ENCODE measurements at regions of chr6 and their contacts with region 1.

Region 1: DNA sequence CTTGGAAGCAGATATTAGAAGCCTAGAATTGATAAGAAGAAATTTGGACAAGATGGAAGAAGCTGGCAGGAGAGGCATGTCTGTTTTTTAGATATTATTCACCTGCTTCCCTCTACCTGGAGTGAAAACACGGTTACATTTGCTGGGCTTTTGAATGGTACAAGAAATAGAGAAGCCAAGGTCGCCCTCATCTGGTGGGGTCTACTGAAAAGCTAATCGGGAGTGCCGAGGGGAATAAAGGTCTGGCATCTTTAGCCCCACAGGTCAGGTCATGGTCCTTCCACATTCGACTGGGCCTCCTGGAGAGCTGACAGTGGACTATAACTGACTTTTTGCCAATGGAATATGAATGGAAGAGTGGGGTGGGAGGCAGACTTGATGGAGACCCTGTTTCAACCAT is 4.6 kb upstream of the C2 start:
- DNase-seq: peak in 6 of 9 experiments; percentile 11 to 50 (median 30)
- ATAC-seq: no peak
- H3K4me3 ChIP-seq: no peak overlapping the region
- H3K4me3 Mint-ChIP-seq: no peak overlapping the region
- H3K27ac ChIP-seq: no peak overlapping the region
- H3K27ac Mint-ChIP-seq: no peak overlapping the region
- H3K4me1 ChIP-seq: no peaks in the 10 kb centered on the region
- H3K4me1 Mint-ChIP-seq: no peaks in the 10 kb centered on the region
- H3K27me3 ChIP-seq: no peaks in the 10 kb centered on the region
- H3K27me3 Mint-ChIP-seq: no peaks in the 10 kb centered on the region
- CTCF ChIP-seq: no peak

Region 2: DNA sequence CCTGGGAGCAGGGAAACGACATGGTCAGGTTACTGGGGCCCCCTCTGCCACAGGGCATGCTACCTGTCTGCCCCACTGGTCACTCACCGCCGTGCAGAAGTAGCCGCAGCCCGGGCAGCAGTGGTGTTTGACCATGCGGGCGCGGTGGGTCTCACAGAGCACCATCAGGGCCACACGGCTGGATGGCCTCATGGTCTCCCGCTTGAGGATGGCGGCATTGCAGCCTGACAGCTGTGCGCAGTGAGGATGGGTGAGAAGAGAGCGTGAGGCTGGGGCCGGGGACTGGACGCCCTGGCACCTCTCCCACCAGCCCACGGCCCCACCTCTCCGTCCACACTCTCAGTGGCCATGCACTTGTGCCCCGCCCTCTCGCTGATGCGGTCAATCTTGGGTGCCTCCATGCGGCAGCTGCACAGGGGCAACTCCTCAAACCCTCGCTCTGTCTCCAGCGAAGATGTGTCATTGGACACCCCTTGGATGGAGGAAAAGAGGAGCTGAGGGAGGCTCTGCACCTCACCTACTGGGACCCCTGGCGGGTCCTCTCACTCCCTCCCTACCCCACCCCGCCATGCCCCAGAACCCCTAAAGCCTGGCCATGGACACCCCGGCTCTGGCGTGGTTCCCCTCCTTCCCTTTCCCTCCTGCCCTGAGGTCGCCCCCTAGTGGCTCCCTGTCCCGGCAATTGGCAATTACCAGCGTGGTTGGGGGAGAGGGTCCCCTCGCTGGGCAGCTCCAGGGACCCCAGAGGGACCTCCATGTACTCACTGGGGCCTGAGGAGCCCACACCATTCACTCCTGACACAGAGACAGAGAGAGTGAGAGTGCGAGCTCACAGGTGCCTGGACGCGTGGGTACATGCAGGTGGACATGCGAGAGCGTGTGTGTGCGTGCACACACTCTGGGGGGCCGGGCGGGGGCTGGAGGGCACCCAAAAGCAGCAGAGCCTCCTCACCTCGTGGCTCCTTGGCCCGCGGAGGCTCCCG is 34.4 kb before region 1 on chr6:
- CTCF ChIA-PET with region 1: interaction called, 10 read pairs
- POLR2A ChIA-PET with region 1: interaction called, 4 read pairs
- intact Hi-C with region 1: no loop called
- DNase-seq: peak in 8 of 9 experiments; percentile 40 to 70 (median 62)
- ATAC-seq: peak; percentile 44
- H3K4me3 ChIP-seq: no peak overlapping the region
- H3K4me3 Mint-ChIP-seq: no peak overlapping the region
- H3K27ac ChIP-seq: no peak overlapping the region
- H3K27ac Mint-ChIP-seq: no peak overlapping the region
- H3K4me1 ChIP-seq: no peaks in the 10 kb centered on the region
- H3K4me1 Mint-ChIP-seq: peaks cover 3% of the 10 kb centered on the region
- H3K27me3 ChIP-seq: no peaks in the 10 kb centered on the region
- H3K27me3 Mint-ChIP-seq: no peaks in the 10 kb centered on the region
- CTCF ChIP-seq: peak; percentile 77

Measured in CD8-positive, alpha-beta T cell (primary cell).